OCI-LY7 (cell line): ENCODE measurements at regions of chr2 and their contacts with region 1.

Region 1: GRCh38 chr2:170742000-170742399 is 26.9 kb downstream of the SP5 start:
- DNase-seq: no peak
- H3K4me3 ChIP-seq: no peak overlapping the region
- H3K27ac ChIP-seq: no peak overlapping the region
- H3K4me1 ChIP-seq: no peaks in the 10 kb centered on the region
- CTCF ChIP-seq: no peak

Region 2: DNA sequence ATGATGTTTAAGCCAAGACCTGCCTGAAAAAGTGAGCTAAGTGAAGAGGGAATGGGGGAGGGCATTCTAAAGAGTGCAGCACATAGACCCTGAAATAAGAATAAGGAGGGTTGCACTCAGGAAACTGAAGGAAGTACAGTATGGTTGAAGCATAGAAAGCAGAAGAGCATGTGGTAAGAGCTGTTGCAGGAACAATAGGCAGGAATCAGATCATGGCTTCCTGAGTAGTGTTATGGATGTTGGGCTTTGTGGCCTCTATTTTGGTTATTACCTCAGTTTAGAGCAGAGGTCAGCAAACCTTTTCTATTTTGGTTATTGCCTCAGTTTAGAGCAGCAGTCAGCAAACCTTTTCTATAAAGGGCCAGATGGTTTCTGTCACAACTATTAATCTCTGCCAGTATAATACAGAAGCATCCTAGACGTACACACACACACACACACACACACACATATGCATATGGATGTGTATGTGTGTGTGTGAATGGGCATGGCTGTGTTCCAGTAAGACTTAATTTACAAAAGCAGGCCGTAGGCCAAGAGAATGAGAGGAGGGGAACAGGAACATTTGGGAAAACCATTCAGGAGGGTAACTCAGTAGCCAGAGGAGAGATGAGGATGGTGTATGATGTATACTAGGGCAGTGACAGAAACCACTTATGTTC is 655.1 kb before region 1 on chr2:
- CTCF ChIA-PET with region 1: no interaction called
- POLR2A ChIA-PET with region 1: no interaction called
- intact Hi-C with region 1: no loop called
- DNase-seq: no peak
- H3K4me3 ChIP-seq: no peak overlapping the region
- H3K27ac ChIP-seq: no peak overlapping the region
- H3K4me1 ChIP-seq: no peaks in the 10 kb centered on the region
- CTCF ChIP-seq: no peak

Region 3: DNA sequence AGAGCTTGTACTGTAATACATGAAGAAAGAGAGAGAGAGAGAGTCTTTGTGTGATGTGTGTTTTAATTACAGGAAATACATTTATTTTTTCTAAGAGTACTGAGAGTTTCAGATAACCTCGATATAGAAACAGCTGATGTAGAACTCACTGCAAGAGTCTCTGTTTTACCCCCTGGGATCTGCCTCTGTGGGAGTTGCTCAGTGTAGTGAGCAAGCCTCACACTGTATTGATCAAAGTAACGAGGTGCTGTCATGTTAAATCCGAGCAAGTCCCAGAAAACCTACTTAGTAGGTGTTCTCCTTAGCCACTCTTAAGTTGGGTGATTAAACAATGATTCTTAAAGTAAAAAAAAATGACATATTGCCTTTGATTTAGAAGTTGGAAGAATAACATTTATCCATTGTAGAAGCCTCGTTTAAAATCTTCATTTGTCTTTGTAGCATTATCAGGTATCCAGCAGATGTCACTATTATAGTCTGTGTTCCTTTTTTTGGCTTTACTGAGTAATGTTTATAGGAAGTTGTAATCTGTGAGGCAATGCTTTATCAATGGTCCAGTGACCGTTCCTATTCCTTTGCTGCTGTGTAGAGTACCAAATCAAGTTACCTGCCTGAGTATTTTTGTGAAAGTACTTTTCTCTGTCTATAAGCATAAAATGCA is 345.1 kb before region 1 on chr2:
- CTCF ChIA-PET with region 1: no interaction called
- POLR2A ChIA-PET with region 1: interaction called, 10 read pairs
- intact Hi-C with region 1: no loop called
- DNase-seq: peak; percentile 10
- H3K4me3 ChIP-seq: no peak overlapping the region
- H3K27ac ChIP-seq: no peak overlapping the region
- H3K4me1 ChIP-seq: peaks cover 5% of the 10 kb centered on the region
- CTCF ChIP-seq: peak; percentile 71

Region 4: DNA sequence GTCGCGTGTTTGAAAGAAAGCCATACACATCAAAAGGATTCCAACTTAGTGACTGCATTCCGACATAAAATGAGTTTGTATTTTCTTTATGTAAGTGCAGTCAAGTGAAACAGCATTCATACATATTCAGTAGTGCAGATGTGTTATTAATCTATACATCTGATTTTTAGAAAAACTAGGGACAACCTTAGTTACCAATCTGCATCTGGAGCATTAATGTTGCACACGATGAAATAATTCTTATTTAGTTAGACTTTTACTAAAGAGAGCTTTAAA is 188.9 kb after region 1 on chr2:
- CTCF ChIA-PET with region 1: no interaction called
- POLR2A ChIA-PET with region 1: no interaction called
- intact Hi-C with region 1: no loop called
- DNase-seq: no peak
- H3K4me3 ChIP-seq: peak overlapping the region; percentile 75
- H3K27ac ChIP-seq: peak overlapping the region; percentile 68
- H3K4me1 ChIP-seq: peaks cover 38% of the 10 kb centered on the region
- CTCF ChIP-seq: no peak